ENCODE measurements at regions of chr6 and their contacts with region 1.

Region 1: DNA sequence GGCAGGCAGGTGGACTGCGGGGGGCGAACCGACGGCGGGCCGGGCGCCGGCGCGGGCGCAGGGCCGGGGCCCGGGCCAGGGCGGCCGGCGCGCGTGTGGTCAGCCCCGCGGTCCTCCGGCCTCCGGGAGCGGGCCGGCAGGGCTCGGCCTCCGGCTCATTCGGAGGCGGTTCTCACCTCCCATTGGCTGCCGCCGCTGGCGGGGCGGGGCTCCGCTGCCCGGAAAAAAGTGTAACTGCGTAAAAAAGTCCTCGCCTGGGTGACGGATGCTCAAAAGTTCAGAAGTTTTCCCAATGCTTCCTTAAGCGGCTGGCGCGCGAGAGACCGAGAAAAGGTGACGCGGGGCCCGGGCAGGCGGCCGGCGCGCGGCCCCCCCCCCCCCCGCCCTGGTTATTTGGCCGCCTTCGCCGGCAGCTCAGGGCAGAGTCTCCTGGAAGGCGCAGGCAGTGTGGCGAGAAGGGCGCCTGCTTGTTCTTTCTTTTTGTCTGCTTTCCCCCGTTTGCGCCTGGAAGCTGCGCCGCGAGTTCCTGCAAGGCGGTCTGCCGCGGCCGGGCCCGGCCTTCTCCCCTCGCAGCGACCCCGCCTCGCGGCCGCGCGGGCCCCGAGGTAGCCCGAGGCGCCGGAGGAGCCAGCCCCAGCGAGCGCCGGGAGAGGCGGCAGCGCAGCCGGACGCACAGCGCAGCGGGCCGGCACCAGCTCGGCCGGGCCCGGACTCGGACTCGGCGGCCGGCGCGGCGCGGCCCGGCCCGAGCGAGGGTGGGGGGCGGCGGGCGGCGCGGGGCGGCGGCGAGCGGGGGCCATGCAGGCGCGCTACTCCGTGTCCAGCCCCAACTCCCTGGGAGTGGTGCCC is at the start of gene FOXC1:
- DNase-seq: peak; percentile 82 to 94 (median 92)
- H3K4me3 ChIP-seq: peak within 1 kb of the TSS; percentile 57
- H3K27ac ChIP-seq: peak within 1 kb of the TSS; percentile 90 to 92
- H3K4me1 ChIP-seq: peaks cover 7% of the 10 kb centered on the region
- H3K27me3 ChIP-seq: peaks cover 5% of the 10 kb centered on the region
- CTCF ChIP-seq: no peak
- EP300 ChIP-seq: no peak
- POLR2A ChIP-seq: no peak
- total RNA-seq, gene FOXC1: 4.3 to 15.9 (median 5.8) TPM

Region 2: GRCh38 chr6:1381481-1382330 is 228.2 kb before region 1 on chr6:
- intact Hi-C with region 1: no loop called
- DNase-seq: peak in 3 of 5 donors; percentile 28 to 62 (median 50)
- H3K4me3 ChIP-seq: peak overlapping the region; percentile 24
- H3K27ac ChIP-seq: no peak overlapping the region
- H3K4me1 ChIP-seq: peaks cover 3% of the 10 kb centered on the region
- H3K27me3 ChIP-seq: peaks cover 7% of the 10 kb centered on the region
- CTCF ChIP-seq: peak in 1 of 3 donors; percentile 60
- EP300 ChIP-seq: no peak
- POLR2A ChIP-seq: no peak

Region 3: GRCh38 chr6:1832836-1833787 is 223.2 kb after region 1 on chr6:
- intact Hi-C with region 1: loop called in 1 of 4 experiments (anchors 10 kb)
- DNase-seq: peak; percentile 34 to 71 (median 57)
- H3K4me3 ChIP-seq: no peak overlapping the region
- H3K27ac ChIP-seq: no peak overlapping the region
- H3K4me1 ChIP-seq: peaks cover 4% of the 10 kb centered on the region
- H3K27me3 ChIP-seq: no peaks in the 10 kb centered on the region
- CTCF ChIP-seq: no peak
- EP300 ChIP-seq: no peak
- POLR2A ChIP-seq: no peak

Region 4: GRCh38 chr6:1901556-1901955 is 291.7 kb after region 1 on chr6:
- intact Hi-C with region 1: loop called in 1 of 4 experiments (anchors 10 kb)
- DNase-seq: no peak
- H3K4me3 ChIP-seq: no peak overlapping the region
- H3K27ac ChIP-seq: no peak overlapping the region
- H3K4me1 ChIP-seq: peaks cover 9% of the 10 kb centered on the region
- H3K27me3 ChIP-seq: no peaks in the 10 kb centered on the region
- CTCF ChIP-seq: no peak
- EP300 ChIP-seq: no peak
- POLR2A ChIP-seq: no peak

Region 5: DNA sequence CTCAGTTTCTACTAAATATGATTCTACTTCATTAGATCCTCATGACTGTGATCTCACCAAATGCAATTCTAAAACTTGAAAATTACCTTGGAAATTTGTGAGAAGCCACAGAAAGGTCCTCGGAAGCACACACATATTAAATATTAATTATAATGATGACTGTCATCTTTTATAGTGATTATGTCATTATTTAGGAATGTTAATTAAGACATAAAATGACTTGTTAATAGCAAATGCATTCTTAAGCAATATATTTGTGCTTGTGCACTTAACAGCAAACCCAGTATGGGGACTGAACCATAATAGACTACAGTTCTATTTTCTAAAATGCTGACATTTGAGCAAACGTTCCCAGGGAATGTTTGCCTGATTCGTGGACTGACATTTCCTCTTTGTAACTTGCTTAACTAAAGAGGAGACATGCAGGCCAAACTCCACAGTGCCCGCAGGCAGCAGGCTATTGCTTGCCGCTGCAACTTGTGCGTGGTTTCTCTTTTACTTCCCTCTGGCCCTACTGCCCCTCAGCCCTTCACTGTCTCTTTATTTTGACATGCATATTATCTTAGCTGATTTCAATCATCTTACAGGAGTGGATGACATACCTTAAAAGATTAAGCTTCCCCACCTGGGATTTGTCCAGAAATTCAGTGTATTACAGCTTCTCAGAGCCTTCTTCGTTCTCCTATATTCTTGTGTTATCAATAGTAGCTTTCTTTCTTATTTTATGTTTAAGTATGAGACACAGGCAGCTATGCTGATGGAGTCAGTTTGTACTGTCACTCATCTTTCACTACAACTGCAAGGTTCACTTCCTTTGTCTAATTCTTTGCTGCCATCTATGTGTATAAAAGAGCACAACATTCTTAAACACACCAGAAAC is 494.0 kb after region 1 on chr6:
- intact Hi-C with region 1: loop called in 2 of 4 experiments (anchors 2 to 5 kb)
- DNase-seq: no peak
- H3K4me3 ChIP-seq: no peak overlapping the region
- H3K27ac ChIP-seq: no peak overlapping the region
- H3K4me1 ChIP-seq: no peaks in the 10 kb centered on the region
- H3K27me3 ChIP-seq: no peaks in the 10 kb centered on the region
- CTCF ChIP-seq: peak in 1 of 3 donors; percentile 31
- EP300 ChIP-seq: no peak
- POLR2A ChIP-seq: no peak

Region 6: GRCh38 chr6:2353412-2354137 is 743.7 kb after region 1 on chr6:
- intact Hi-C with region 1: loop called in 1 of 4 experiments (anchors 5 kb)
- DNase-seq: peak; percentile 41 to 75 (median 63)
- H3K4me3 ChIP-seq: no peak overlapping the region
- H3K27ac ChIP-seq: no peak overlapping the region
- H3K4me1 ChIP-seq: peaks cover 5% of the 10 kb centered on the region
- H3K27me3 ChIP-seq: no peaks in the 10 kb centered on the region
- CTCF ChIP-seq: peak; percentile 50 to 70 (median 69)
- EP300 ChIP-seq: no peak
- POLR2A ChIP-seq: no peak

Region 7: GRCh38 chr6:2749969-2750600 is 1140.2 kb after region 1 on chr6:
- intact Hi-C with region 1: loop called in 1 of 4 experiments (anchors 10 kb)
- DNase-seq: peak in 4 of 5 donors; percentile 57 to 69 (median 67)
- H3K4me3 ChIP-seq: no peak overlapping the region
- H3K27ac ChIP-seq: no peak overlapping the region
- H3K4me1 ChIP-seq: no peaks in the 10 kb centered on the region
- H3K27me3 ChIP-seq: no peaks in the 10 kb centered on the region
- CTCF ChIP-seq: peak; percentile 56 to 62 (median 60)
- EP300 ChIP-seq: no peak
- POLR2A ChIP-seq: no peak

Region 8: GRCh38 chr6:2765166-2765895 is 1155.5 kb after region 1 on chr6 and contains the start of gene WRNIP1:
- intact Hi-C with region 1: loop called in 1 of 4 experiments (anchors 10 kb)
- DNase-seq: peak; percentile 98 to 99 (median 99)
- H3K4me3 ChIP-seq: peak within 1 kb of the TSS; percentile 53
- H3K27ac ChIP-seq: peak within 1 kb of the TSS; percentile 70 to 95
- H3K4me1 ChIP-seq: peaks cover 11% of the 10 kb centered on the region
- H3K27me3 ChIP-seq: no peaks in the 10 kb centered on the region
- CTCF ChIP-seq: peak; percentile 64 to 94 (median 93)
- EP300 ChIP-seq: no peak
- POLR2A ChIP-seq: peak; percentile 60
- total RNA-seq, gene WRNIP1: 30.4 to 73.4 (median 34.6) TPM